MCF 10A (cell line): ENCODE measurements at regions of chr14 and their contacts with region 1.

Region 1: DNA sequence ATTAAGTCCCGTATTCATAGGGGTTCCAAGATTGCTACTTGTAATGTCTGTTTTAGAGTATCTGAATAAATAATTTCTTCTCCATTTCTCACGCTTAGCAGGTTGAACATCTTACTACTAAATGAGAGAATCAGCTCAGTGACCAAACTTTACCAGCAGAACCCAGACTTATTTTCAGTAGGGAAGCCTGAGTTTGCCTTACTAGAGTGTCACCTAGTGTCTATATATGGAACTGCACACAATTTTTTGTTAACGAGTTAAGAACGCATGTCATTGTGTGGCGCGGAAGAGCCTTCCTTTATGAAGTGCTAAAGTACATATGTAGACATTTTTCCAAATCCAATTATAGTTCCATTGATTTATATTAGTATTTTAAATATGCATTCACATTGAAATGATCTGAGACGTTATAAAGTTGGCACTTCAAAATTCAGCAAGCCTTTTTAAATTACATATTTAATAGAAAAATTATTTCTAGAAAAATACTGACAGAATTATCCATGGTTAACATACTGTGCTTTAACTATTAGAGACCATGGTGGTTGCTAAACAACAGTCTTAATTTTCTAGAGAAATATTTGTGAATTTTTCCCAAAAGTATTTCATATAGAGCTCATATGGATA is 88.3 kb downstream of the RPS29 start:
- DNase-seq: peak; percentile 68
- H3K4me3 Mint-ChIP-seq: no peak overlapping the region
- H3K27ac Mint-ChIP-seq: no peak overlapping the region
- H3K4me1 Mint-ChIP-seq: no peaks in the 10 kb centered on the region
- H3K27me3 Mint-ChIP-seq: no peaks in the 10 kb centered on the region
- CTCF ChIP-seq: peak; percentile 78

Region 2: DNA sequence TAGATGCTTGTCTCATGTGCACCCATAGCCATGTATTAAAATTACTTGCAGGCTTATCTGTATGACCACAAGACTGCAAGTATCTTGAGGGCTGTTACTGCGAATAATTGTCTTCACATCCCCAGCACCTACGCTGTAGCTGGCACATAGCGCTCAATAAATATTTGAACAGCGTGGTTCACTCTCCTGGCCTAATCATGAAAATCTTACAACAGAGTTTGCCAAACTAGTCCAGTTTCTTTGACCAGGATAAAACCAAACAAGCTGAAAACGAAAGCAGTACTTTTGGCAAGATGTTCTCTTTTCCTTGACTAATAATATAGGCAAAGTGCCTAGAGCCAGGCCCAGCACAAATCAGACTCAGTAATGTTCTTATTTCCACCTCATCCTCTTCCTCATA is 18.4 kb before region 1 on chr14:
- CTCF ChIA-PET with region 1: interaction called, 61 read pairs
- POLR2A ChIA-PET with region 1: no interaction called
- intact Hi-C with region 1: no loop called
- DNase-seq: no peak
- H3K4me3 Mint-ChIP-seq: no peak overlapping the region
- H3K27ac Mint-ChIP-seq: no peak overlapping the region
- H3K4me1 Mint-ChIP-seq: no peaks in the 10 kb centered on the region
- H3K27me3 Mint-ChIP-seq: peaks cover 7% of the 10 kb centered on the region
- CTCF ChIP-seq: no peak

Region 3: GRCh38 chr14:49485290-49485689 is 12.5 kb before region 1 on chr14:
- CTCF ChIA-PET with region 1: interaction called, 61 read pairs
- POLR2A ChIA-PET with region 1: no interaction called
- intact Hi-C with region 1: no loop called
- DNase-seq: no peak
- H3K4me3 Mint-ChIP-seq: no peak overlapping the region
- H3K27ac Mint-ChIP-seq: no peak overlapping the region
- H3K4me1 Mint-ChIP-seq: no peaks in the 10 kb centered on the region
- H3K27me3 Mint-ChIP-seq: peaks cover 21% of the 10 kb centered on the region
- CTCF ChIP-seq: no peak

Region 4: DNA sequence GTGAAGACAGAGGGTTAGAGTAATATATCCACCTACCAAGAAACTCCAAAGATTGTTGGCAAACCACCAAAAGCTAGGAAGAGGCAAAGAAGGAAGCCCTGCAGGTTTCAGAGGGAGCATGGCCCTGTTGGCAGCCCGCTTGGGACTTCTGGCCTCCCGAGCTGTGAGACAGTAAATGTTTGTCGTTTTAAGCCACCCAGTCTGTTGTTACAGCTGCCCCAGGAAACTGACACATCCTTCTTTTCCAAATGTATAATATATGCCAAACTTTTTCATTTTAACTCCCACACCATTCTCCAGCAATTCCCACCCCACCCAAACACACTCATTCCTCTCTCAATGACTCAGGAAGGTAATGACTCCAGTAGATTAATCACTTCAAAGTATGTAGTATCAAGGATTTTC is 14.3 kb after region 1 on chr14:
- CTCF ChIA-PET with region 1: interaction called, 12 read pairs
- POLR2A ChIA-PET with region 1: no interaction called
- intact Hi-C with region 1: no loop called
- DNase-seq: peak; percentile 75
- H3K4me3 Mint-ChIP-seq: peak overlapping the region; percentile 1
- H3K27ac Mint-ChIP-seq: peak overlapping the region; percentile 80
- H3K4me1 Mint-ChIP-seq: peaks cover 11% of the 10 kb centered on the region
- H3K27me3 Mint-ChIP-seq: no peaks in the 10 kb centered on the region
- CTCF ChIP-seq: no peak

Region 5: DNA sequence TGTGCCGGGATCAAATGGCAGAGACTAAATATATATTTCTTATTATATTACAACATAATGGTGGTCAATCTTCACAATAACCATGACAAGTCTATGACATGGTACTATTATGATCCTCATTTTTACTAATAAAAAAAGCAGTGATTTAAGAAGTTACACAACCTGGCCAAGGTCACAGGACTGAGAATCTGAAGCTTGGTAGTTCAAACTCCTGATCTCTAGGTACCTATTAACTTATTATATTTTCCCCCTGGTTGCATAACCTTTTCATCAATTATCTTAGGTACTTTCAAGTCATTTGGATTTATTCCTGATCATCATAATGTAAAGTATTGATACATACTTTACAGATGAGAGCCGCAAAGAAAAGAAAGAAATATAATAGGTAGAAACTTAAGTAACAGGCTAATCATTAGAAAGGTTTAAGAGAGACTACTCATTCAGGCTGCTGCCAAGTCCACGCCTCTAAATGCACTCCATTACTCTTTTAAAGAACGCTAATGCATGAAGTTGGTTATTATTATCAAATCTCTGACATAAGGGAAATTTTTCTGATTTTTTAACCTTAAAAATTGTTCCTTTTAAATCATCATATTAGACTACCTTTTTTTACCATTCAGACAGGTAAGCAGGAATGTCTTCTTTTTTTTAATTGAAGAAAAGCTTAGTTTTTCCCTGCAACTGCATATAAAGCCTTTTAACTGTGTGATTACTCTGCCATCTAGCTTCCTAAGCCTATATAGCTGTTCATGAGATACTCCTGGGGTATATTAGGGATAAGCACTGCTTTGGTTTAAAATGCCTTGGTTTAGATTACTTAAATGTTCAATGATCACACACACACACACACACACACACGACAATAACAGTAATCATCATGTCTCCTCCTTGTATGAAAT is 52.7 kb after region 1 on chr14:
- CTCF ChIA-PET with region 1: interaction called, 10 read pairs
- POLR2A ChIA-PET with region 1: no interaction called
- intact Hi-C with region 1: no loop called
- DNase-seq: no peak
- H3K4me3 Mint-ChIP-seq: no peak overlapping the region
- H3K27ac Mint-ChIP-seq: no peak overlapping the region
- H3K4me1 Mint-ChIP-seq: no peaks in the 10 kb centered on the region
- H3K27me3 Mint-ChIP-seq: no peaks in the 10 kb centered on the region
- CTCF ChIP-seq: peak; percentile 35